ENCODE measurements at regions of chr22 and their contacts with region 1.

Region 1: GRCh38 chr22:49970528-49971231 is 10.1 kb downstream of the PIM3 start:
- DNase-seq: peak; percentile 80 to 98
- ATAC-seq: peak; percentile 75 to 87
- H3K4me3 ChIP-seq: peak overlapping the region; percentile 52
- H3K27ac ChIP-seq: peak overlapping the region; percentile 92 to 96
- H3K4me1 ChIP-seq: peaks cover 31% of the 10 kb centered on the region
- CTCF ChIP-seq: no peak
- EP300 ChIP-seq: peak in 1 of 2 experiments; percentile 49; a peak in 1 of 5 replicates
- POLR2A ChIP-seq: peak; percentile 53
- RAD21 ChIP-seq: no peak

Region 2: GRCh38 chr22:49894322-49895054 is 76.2 kb before region 1 on chr22:
- CTCF ChIA-PET with region 1: no interaction called
- POLR2A ChIA-PET with region 1: no interaction called
- DNase-seq: no peak
- ATAC-seq: peak in 1 of 2 experiments; percentile 31; a peak in 1 of 6 replicates
- H3K4me3 ChIP-seq: no peak overlapping the region
- H3K27ac ChIP-seq: no peak overlapping the region
- H3K4me1 ChIP-seq: no peaks in the 10 kb centered on the region
- CTCF ChIP-seq: no peak
- EP300 ChIP-seq: no peak
- POLR2A ChIP-seq: no peak
- RAD21 ChIP-seq: no peak

Region 3: GRCh38 chr22:49960159-49961004 is 10.3 kb before region 1 on chr22 and contains the start of gene PIM3:
- CTCF ChIA-PET with region 1: interaction called, 3 read pairs
- POLR2A ChIA-PET with region 1: interaction called, 13 read pairs
- DNase-seq: peak; percentile 90 to 95
- ATAC-seq: peak; percentile 65 to 86
- H3K4me3 ChIP-seq: peak within 1 kb of the TSS; percentile 79
- H3K27ac ChIP-seq: peak within 1 kb of the TSS; percentile 96
- H3K4me1 ChIP-seq: peaks cover 38% of the 10 kb centered on the region
- CTCF ChIP-seq: no peak
- EP300 ChIP-seq: no peak
- POLR2A ChIP-seq: peak; percentile 91
- RAD21 ChIP-seq: no peak
- polyA plus RNA-seq, gene PIM3: 3.8 and 4.4 TPM in 2 replicates